Activated naive CD4-positive, alpha-beta T cell treated with anti-CD3 and anti-CD28 coated beads, Interleukin-2, amount 10 ng/mL, durations not matched to agents 7 days and 5 days (primary cell): ENCODE measurements at regions of chr9 and their contacts with region 1.

Region 1: DNA sequence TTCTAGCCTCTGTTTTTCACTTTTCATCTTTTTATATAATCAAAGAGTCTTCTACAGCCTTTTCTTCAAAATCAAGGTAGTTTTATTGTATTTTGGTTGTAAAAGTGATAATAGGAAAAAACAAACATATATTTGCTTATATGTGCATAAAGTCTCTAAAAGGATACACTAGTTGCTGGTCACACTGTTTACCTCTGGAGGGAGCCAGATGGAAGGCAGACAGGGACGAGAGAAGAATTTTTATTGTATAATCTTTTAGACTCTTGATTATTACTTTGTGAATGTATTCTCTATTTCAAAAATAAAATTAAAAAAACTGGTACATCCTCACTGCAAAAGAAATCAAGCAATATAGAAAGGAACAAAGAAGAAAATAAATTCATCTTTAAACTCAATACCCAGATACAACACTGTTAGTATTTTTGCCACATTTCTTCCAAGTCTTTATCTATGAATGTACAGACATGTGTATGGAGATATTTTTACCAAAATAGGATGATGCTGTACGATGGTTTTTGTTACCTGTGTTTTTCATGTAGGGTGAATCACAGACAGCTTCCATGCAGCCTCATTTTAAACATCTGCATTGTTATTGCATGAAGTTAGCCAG is 6.1 kb upstream of the RNF183 start:
- DNase-seq: peak; percentile 52
- H3K4me3 Mint-ChIP-seq: no peak overlapping the region
- H3K27ac Mint-ChIP-seq: no peak overlapping the region
- H3K4me1 Mint-ChIP-seq: no peaks in the 10 kb centered on the region
- H3K27me3 Mint-ChIP-seq: peaks cover 10% of the 10 kb centered on the region

Region 2: GRCh38 chr9:113215135-113215534 is 94.2 kb before region 1 on chr9:
- CTCF ChIA-PET with region 1: no interaction called
- DNase-seq: no peak
- H3K4me3 Mint-ChIP-seq: no peak overlapping the region
- H3K27ac Mint-ChIP-seq: peak overlapping the region; percentile 29
- H3K4me1 Mint-ChIP-seq: peaks cover 36% of the 10 kb centered on the region
- H3K27me3 Mint-ChIP-seq: no peaks in the 10 kb centered on the region

Region 3: DNA sequence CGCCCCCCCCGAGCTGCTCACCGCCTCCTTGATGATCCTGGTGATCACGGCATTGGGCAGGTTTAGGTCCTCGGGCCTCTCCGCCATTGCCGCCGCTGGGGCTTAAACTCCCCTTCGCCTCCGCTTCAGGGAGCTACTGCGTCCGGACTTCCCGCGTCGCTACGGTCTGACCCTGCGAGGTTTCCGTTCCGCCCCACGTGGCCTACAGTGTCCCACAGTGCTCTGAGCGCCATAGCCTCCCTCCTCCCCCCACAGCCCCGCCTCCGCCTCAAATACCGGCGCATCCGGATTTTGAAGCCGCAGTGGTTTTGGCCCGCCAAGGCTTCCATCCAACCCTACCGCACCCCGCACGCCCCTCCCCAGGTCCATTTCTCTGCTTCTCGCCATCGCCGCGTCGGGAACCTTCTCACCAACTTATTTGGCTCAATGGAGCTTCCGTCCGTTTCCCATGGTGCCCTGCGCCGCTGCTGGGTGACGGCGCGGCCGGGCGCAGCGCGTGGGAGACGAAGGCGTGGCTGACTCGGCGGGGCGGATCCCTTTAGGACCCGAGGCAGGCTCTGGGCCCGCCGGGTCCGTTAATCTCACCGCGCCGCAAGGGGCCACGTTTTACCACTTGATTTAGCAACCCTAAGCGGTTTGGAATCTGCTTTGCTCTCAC is 101.0 kb after region 1 on chr9 and contains the starts of genes C9orf43 and POLE3:
- CTCF ChIA-PET with region 1: interaction called, 43 read pairs
- DNase-seq: peak; percentile 96
- H3K4me3 Mint-ChIP-seq: peak within 1 kb of the TSS; percentile 91
- H3K27ac Mint-ChIP-seq: peak within 1 kb of the TSS; percentile 99
- H3K4me1 Mint-ChIP-seq: peaks cover 39% of the 10 kb centered on the region
- H3K27me3 Mint-ChIP-seq: no peaks in the 10 kb centered on the region